PC-9 (cell line): ENCODE measurements at regions of chr1 and their contacts with region 1.

Region 1: GRCh38 chr1:17236779-17237560 is 11.9 kb upstream of the PADI3 start:
- DNase-seq: peak; percentile 83 to 94
- H3K4me3 ChIP-seq: no peak overlapping the region
- H3K27ac ChIP-seq: peak overlapping the region; percentile 53
- H3K4me1 ChIP-seq: peaks cover 52% of the 10 kb centered on the region
- H3K27me3 ChIP-seq: no peaks in the 10 kb centered on the region
- CTCF ChIP-seq: peak; percentile 87

Region 2: DNA sequence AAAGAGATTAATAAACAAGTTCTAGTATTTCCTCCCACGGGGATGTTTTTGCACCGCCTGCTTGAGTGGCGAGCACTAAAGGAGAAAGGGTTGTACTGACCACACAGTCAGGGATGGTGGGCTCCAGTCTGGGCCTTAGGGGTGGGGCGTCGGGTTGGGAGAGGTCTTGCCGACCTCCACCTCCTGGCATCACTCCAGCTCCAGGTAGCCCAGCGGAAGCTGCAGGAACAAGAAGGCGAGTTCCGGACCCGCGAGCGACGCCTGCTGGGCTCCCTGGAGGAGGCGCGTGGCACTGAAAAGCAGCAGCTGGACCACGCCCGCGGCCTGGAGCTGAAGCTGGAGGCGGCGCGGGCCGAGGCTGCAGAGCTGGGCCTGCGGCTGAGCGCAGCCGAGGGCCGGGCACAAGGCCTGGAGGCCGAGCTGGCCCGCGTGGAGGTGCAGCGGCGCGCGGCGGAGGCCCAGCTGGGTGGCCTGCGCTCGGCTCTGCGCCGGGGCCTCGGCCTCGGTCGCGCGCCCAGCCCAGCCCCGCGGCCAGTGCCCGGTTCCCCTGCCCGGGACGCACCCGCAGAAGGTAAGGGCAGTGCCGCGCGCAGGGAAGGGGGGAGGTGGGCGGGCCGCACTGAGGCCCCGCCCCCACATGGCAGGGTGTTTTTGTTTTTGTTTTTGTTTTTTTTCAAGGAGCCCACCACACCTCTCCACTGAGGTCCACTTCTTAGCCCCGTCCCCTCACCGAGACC is 276.2 kb before region 1 on chr1:
- CTCF ChIA-PET with region 1: no interaction called
- POLR2A ChIA-PET with region 1: no interaction called
- intact Hi-C with region 1: loop called (anchors 10 kb)
- DNase-seq: peak; percentile 63 to 86
- H3K4me3 ChIP-seq: peak overlapping the region; percentile 44; the same call in 1 of the 2 replicates
- H3K27ac ChIP-seq: no peak overlapping the region
- H3K4me1 ChIP-seq: no peaks in the 10 kb centered on the region
- H3K27me3 ChIP-seq: no peaks in the 10 kb centered on the region
- CTCF ChIP-seq: peak; percentile 61

Region 3: DNA sequence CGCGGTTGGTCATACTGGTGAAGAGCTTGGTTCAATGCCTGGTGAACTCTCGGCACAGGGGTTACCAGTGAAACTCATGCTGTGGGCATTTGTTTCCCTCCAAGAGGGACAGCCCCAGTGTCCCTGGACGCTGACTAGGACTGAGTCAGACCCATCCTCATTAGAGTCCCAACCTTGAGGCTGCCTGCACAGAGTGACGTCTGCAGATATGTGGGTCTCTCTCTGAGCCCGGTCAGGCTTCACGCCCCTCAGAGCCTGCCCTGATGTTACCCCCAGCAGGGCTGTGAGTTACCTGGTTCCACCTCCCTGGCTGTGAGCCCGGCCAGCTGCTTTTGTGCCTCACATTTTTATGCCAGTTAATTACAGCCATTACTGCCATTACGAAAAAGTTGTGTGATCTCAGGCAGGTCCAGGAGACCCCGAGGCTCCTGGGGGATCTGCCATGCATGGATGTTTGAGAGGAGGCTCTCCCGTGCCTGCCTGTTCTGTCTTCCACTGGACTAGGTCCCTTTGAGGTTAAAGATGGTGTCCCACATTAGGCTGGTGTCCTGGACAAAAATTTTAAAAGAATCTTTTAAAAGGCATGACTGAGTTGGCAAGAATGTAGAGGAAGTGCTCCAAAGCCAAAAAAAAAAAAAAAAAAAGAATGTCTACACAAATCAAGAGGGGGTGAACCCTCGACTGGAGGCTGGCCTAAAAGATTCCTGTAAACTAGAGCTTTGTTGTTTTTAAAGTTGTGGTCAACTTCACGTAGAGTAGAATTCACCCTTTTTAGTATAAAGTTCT is 68.7 kb before region 1 on chr1:
- CTCF ChIA-PET with region 1: no interaction called
- POLR2A ChIA-PET with region 1: interaction called, 13 read pairs
- intact Hi-C with region 1: no loop called
- DNase-seq: peak; percentile 60 to 86
- H3K4me3 ChIP-seq: peak overlapping the region; percentile 30; the same call in 1 of the 2 replicates
- H3K27ac ChIP-seq: peak overlapping the region; percentile 95
- H3K4me1 ChIP-seq: peaks cover 32% of the 10 kb centered on the region
- H3K27me3 ChIP-seq: no peaks in the 10 kb centered on the region
- CTCF ChIP-seq: no peak

Region 4: DNA sequence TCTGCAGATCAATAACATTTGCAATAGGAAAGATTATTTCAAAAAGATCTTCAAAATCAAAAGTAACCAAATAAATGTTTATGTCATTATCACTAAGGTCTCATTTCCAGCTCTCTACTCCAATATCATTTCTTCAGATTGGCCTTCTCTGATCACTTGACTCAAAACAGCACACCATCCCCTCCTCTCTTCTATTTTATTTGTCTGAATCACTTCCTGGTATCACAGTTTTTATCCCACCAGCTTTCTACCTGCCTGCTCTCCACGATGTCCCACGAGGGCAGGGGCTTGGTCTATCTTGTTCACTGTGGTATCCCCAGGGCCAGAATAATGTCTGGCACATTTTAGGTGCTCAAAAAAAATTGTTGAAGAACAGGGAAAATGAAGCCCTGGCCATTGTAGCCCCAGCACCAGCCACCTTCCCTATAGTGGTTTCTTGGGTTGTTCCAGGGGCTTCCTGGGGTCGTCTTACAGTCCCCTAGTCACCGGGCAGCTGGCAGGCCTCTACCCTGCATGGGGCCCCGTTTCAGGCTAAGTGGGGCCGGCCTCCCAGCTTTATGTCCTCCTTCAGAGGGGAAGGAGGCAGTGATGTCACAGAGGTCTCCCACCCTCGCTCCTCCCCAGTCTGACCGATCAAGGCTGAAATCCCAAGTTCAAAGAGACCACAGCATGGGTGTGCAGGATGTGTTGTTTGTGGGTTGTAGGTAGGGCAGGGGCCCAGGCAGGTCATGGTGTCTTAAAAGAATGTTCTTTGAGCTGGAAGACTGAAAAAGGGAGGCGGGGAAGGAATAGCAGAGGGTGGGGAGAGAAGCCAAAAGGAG is 35.6 kb before region 1 on chr1:
- CTCF ChIA-PET with region 1: no interaction called
- POLR2A ChIA-PET with region 1: interaction called, 14 read pairs
- intact Hi-C with region 1: no loop called
- DNase-seq: peak; percentile 77 to 90
- H3K4me3 ChIP-seq: peak overlapping the region; percentile 15; the same call in 1 of the 2 replicates
- H3K27ac ChIP-seq: peak overlapping the region; percentile 90
- H3K4me1 ChIP-seq: peaks cover 57% of the 10 kb centered on the region
- H3K27me3 ChIP-seq: no peaks in the 10 kb centered on the region
- CTCF ChIP-seq: no peak

Region 5: DNA sequence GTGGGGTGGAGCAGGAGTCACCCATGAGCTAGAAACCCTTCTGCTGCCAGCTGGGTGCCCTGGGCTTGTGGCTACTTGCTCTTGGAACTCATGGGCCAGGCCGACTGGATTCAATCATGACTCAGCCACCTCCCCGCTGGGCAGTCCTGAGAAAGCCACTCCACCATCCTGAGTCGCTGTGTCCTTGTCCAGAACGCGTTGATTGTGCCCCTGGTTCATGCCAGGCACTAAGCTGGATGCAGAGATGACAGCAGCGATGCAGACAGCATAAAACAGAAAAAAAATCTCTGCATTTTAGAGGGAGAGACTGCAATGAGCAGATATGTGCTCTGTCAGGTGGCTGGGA is 21.5 kb before region 1 on chr1:
- CTCF ChIA-PET with region 1: interaction called, 11 read pairs
- POLR2A ChIA-PET with region 1: interaction called, 17 read pairs
- intact Hi-C with region 1: loop called (anchors 1 kb)
- DNase-seq: peak; percentile 64 to 72
- H3K4me3 ChIP-seq: peak overlapping the region; percentile 32; the same call in 1 of the 2 replicates
- H3K27ac ChIP-seq: peak overlapping the region; percentile 95
- H3K4me1 ChIP-seq: peaks cover 63% of the 10 kb centered on the region
- H3K27me3 ChIP-seq: no peaks in the 10 kb centered on the region
- CTCF ChIP-seq: no peak

Region 6: GRCh38 chr1:17286646-17287045 is 49.7 kb after region 1 on chr1:
- CTCF ChIA-PET with region 1: no interaction called
- POLR2A ChIA-PET with region 1: no interaction called
- intact Hi-C with region 1: no loop called
- DNase-seq: no peak
- H3K4me3 ChIP-seq: no peak overlapping the region
- H3K27ac ChIP-seq: no peak overlapping the region
- H3K4me1 ChIP-seq: peaks cover 42% of the 10 kb centered on the region
- H3K27me3 ChIP-seq: no peaks in the 10 kb centered on the region
- CTCF ChIP-seq: no peak

Region 7: DNA sequence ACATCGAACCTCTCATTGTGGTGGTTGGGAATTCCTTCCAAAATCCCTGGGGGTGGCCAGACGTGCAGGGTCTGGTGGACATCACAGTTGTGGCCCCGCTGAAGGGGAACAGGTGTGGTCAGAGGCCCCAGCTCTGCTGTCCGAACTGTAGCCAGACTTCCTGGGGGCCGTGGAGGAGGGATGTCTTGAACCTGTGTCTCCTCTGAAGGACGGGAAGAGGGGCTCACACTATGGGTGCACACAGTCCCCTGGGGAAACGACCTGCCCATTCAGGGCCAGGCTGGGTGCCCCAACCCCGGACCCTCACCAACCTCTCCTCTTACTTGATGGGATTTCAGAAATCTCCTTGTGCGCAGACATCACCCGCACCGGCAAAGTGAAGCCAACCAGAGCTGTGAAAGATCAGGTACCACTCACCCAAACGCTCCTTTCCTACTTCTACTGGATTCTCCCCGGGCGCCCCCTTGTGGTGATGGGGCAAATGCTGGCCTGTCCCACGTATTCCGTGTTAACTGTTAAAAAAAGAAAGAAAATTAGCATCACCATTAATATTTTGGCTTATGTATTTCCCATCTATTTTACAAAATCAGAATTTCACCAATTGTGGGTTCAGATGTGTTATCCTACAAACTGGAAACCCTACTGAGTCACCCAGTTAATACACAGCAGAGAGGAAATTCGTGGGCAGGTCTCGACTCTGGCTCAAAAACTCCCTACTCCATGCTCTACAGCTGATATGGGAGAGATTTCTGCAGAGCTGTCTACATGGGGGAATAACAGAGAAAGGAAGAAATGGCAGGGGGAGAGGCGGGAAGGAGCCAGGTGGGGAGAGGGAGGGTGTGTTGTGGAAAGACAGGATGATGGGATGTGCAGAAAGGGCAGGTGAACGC is 99.1 kb after region 1 on chr1:
- CTCF ChIA-PET with region 1: no interaction called
- POLR2A ChIA-PET with region 1: interaction called, 18 read pairs
- intact Hi-C with region 1: loop called (anchors 1 kb)
- DNase-seq: peak; percentile 55 to 79
- H3K4me3 ChIP-seq: no peak overlapping the region
- H3K27ac ChIP-seq: no peak overlapping the region
- H3K4me1 ChIP-seq: no peaks in the 10 kb centered on the region; the same call in 1 of the 2 replicates
- H3K27me3 ChIP-seq: no peaks in the 10 kb centered on the region
- CTCF ChIP-seq: peak; percentile 86

Region 8: GRCh38 chr1:17653728-17654351 is 416.9 kb after region 1 on chr1:
- CTCF ChIA-PET with region 1: no interaction called
- POLR2A ChIA-PET with region 1: no interaction called
- intact Hi-C with region 1: no loop called
- DNase-seq: peak in 1 of 2 experiments; percentile 43
- H3K4me3 ChIP-seq: no peak overlapping the region
- H3K27ac ChIP-seq: no peak overlapping the region
- H3K4me1 ChIP-seq: no peaks in the 10 kb centered on the region
- H3K27me3 ChIP-seq: no peaks in the 10 kb centered on the region
- CTCF ChIP-seq: peak; percentile 65